Activated T-helper 2 cell treated with anti-CD3 and anti-CD28 coated beads, Interferon-gamma antibody, Interleukin-2, Interleukin-4, amounts not matched to agents 10 μg/mL and 5 μg/mL and 100 μg/mL, durations not matched to agents 14 hours and 24 hours and 36 hours (primary cell): ENCODE measurements at regions of chr7 and their contacts with region 1.

Region 1: DNA sequence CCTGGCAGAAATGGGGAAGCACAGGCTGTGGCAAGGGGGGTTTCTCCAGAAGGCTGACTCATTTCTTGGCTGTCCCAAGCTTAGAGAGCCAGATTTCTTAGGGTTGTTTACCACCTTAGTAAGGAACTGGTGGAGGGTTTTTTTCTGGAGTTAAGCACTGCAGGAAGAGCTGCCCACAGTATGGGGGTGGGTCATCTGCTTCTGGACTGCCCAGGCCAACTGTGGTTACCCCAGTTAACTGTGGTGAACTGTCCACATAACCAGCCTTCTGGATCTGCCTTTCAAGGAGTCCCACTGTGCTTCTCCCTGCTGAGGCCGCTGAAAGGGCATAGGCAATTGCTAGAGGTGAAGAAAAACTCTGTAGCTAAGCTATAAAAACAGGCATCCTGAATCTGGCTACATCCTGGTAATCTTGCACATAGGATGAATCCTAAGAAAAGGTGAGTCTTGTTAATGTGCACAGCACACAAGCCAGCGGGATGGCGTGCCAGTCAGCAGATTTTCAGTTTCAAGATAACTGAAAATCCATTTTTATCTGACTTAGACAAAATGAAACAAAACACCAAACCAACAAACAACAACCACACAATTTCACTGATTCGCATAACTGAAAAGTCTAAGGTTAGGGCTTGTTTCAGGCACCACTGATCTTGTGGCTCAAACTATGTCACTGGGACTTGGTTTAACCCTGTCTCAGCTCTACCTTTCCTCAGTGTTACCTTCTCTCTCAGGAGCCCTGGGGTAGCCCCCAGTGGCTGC is 21.6 kb upstream of the TSPAN33 start:
- DNase-seq: no peak
- H3K4me3 Mint-ChIP-seq: no peak overlapping the region
- H3K27ac Mint-ChIP-seq: peak overlapping the region; percentile 80
- H3K4me1 Mint-ChIP-seq: peaks cover 31% of the 10 kb centered on the region
- H3K27me3 Mint-ChIP-seq: peaks cover 8% of the 10 kb centered on the region

Region 2: DNA sequence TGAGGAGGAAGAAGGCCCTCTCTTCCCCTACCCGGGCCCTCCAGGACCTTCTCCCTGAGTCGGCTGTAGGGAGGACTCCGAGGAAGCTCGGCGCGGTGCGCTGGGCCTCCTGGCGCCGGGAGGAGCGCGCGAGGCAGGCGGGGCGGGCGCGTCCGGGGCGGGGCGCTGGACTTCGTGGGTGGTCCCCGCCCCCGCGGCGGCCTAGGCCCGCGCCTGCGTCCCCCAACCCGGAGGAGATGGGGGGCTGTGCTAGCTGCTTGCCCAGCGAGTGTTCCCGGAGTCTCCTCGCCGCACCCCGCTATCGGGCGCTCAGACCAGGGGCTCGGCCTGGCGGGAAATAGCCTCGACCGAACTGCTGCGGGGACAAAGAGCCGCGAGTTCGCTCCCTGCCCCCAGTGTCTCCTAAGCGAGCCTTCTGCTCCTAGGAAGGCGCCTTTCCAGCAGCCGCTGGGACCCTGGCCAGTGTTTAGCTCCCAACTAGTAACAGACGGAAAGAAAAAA is 46.3 kb after region 1 on chr7:
- intact Hi-C with region 1: loop called (anchors 2 kb)
- DNase-seq: peak; percentile 22
- H3K4me3 Mint-ChIP-seq: peak overlapping the region; percentile 69
- H3K27ac Mint-ChIP-seq: no peak overlapping the region
- H3K4me1 Mint-ChIP-seq: peaks cover 13% of the 10 kb centered on the region
- H3K27me3 Mint-ChIP-seq: peaks cover 22% of the 10 kb centered on the region

Region 3: DNA sequence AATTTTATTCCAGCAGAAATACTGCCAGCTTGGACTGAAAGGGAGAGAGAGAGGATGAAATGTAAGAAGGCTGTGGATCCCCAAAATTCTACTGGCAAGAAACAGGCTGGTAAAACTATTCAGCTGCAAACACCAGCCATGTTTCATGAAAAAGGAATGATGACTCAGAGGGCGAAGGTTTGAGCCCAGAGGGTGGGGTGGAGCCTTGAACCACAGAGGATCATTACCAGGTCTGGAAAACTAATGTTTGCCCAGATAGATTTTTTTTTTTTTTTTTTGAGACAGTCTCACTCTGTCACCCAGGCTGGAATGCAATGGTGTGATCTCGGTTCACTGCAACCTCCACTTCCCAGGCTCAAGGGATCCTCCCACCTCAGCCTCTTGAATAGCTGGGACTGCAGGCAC is 446.9 kb after region 1 on chr7:
- intact Hi-C with region 1: no loop called
- DNase-seq: no peak
- H3K4me3 Mint-ChIP-seq: no peak overlapping the region
- H3K27ac Mint-ChIP-seq: no peak overlapping the region
- H3K4me1 Mint-ChIP-seq: peaks cover 2% of the 10 kb centered on the region
- H3K27me3 Mint-ChIP-seq: peaks cover 23% of the 10 kb centered on the region

Region 4: GRCh38 chr7:130649004-130649790 is 1526.3 kb after region 1 on chr7:
- intact Hi-C with region 1: loop called (anchors 5 kb)
- DNase-seq: no peak
- H3K4me3 Mint-ChIP-seq: peak overlapping the region; percentile 30
- H3K27ac Mint-ChIP-seq: peak overlapping the region; percentile 89
- H3K4me1 Mint-ChIP-seq: peaks cover 37% of the 10 kb centered on the region
- H3K27me3 Mint-ChIP-seq: no peaks in the 10 kb centered on the region